Naive thymus-derived CD4-positive, alpha-beta T cell (primary cell): ENCODE measurements at regions of chr15 and their contacts with region 1.

Region 1: GRCh38 chr15:85689729-85690128 is 105.0 kb downstream of the KLHL25 start:
- DNase-seq: peak; percentile 44 to 78 (median 71)
- ATAC-seq: peak; percentile 85
- H3K4me3 ChIP-seq: peak overlapping the region; percentile 83
- H3K4me3 Mint-ChIP-seq: peak overlapping the region; percentile 90 to 99 (median 98)
- H3K27ac ChIP-seq: peak overlapping the region; percentile 88
- H3K27ac Mint-ChIP-seq: peak overlapping the region; percentile 92 to 99 (median 98)
- H3K4me1 ChIP-seq: peaks cover 45 to 49% of the 10 kb centered on the region in 2 donors
- H3K4me1 Mint-ChIP-seq: peaks cover 30 to 87% (median 76%) of the 10 kb centered on the region in 7 donors
- H3K27me3 ChIP-seq: no peaks in the 10 kb centered on the region
- H3K27me3 Mint-ChIP-seq: no peaks in the 10 kb centered on the region

Region 2: GRCh38 chr15:85318048-85318731 is 371.5 kb before region 1 on chr15:
- CTCF ChIA-PET with region 1: no interaction called
- POLR2A ChIA-PET with region 1: no interaction called
- intact Hi-C with region 1: loop called in 1 of 2 experiments (anchors 5 kb)
- DNase-seq: peak in 1 of 9 donors; percentile 29
- ATAC-seq: peak; percentile 61
- H3K4me3 ChIP-seq: no peak overlapping the region
- H3K4me3 Mint-ChIP-seq: peak overlapping the region in 2 of 10 donors; percentile 16 to 74
- H3K27ac ChIP-seq: no peak overlapping the region
- H3K27ac Mint-ChIP-seq: peak overlapping the region in 4 of 9 donors; percentile 22 to 90 (median 27)
- H3K4me1 ChIP-seq: peaks cover 28 to 29% of the 10 kb centered on the region in 2 donors
- H3K4me1 Mint-ChIP-seq: peaks cover 22 to 53% (median 35%) of the 10 kb centered on the region in 7 donors
- H3K27me3 ChIP-seq: no peaks in the 10 kb centered on the region
- H3K27me3 Mint-ChIP-seq: no peaks in the 10 kb centered on the region

Region 3: GRCh38 chr15:85361323-85361722 is 328.4 kb before region 1 on chr15:
- CTCF ChIA-PET with region 1: no interaction called
- POLR2A ChIA-PET with region 1: no interaction called
- intact Hi-C with region 1: no loop called
- DNase-seq: no peak
- ATAC-seq: no peak
- H3K4me3 ChIP-seq: no peak overlapping the region
- H3K4me3 Mint-ChIP-seq: no peak overlapping the region
- H3K27ac ChIP-seq: no peak overlapping the region
- H3K27ac Mint-ChIP-seq: no peak overlapping the region
- H3K4me1 ChIP-seq: no peaks in the 10 kb centered on the region
- H3K4me1 Mint-ChIP-seq: peaks cover 0 to 10% (median 6%) of the 10 kb centered on the region in 7 donors
- H3K27me3 ChIP-seq: no peaks in the 10 kb centered on the region
- H3K27me3 Mint-ChIP-seq: peaks cover 0 to 9% (median 0%) of the 10 kb centered on the region in 5 donors

Region 4: GRCh38 chr15:85543741-85544155 is 146.0 kb before region 1 on chr15:
- CTCF ChIA-PET with region 1: no interaction called
- POLR2A ChIA-PET with region 1: no interaction called
- intact Hi-C with region 1: loop called in 1 of 2 experiments (anchors 5 kb)
- DNase-seq: peak in 8 of 9 donors; percentile 18 to 60 (median 40)
- ATAC-seq: peak; percentile 81
- H3K4me3 ChIP-seq: no peak overlapping the region
- H3K4me3 Mint-ChIP-seq: peak overlapping the region; percentile 46 to 76 (median 63)
- H3K27ac ChIP-seq: peak overlapping the region; percentile 32
- H3K27ac Mint-ChIP-seq: peak overlapping the region; percentile 44 to 93 (median 69)
- H3K4me1 ChIP-seq: peaks cover 0 to 21% of the 10 kb centered on the region in 2 donors
- H3K4me1 Mint-ChIP-seq: peaks cover 49 to 87% (median 77%) of the 10 kb centered on the region in 7 donors
- H3K27me3 ChIP-seq: no peaks in the 10 kb centered on the region
- H3K27me3 Mint-ChIP-seq: no peaks in the 10 kb centered on the region

Region 5: GRCh38 chr15:85646538-85647091 is 43.1 kb before region 1 on chr15:
- CTCF ChIA-PET with region 1: no interaction called
- POLR2A ChIA-PET with region 1: no interaction called
- intact Hi-C with region 1: loop called in 1 of 2 experiments (anchors 2 kb)
- DNase-seq: peak in 1 of 9 donors; percentile 35
- ATAC-seq: peak; percentile 78
- H3K4me3 ChIP-seq: no peak overlapping the region
- H3K4me3 Mint-ChIP-seq: peak overlapping the region in 2 of 10 donors; percentile 21 to 51
- H3K27ac ChIP-seq: no peak overlapping the region
- H3K27ac Mint-ChIP-seq: peak overlapping the region in 6 of 9 donors; percentile 10 to 81 (median 48)
- H3K4me1 ChIP-seq: peaks cover 8 to 35% of the 10 kb centered on the region in 2 donors
- H3K4me1 Mint-ChIP-seq: peaks cover 28 to 45% (median 38%) of the 10 kb centered on the region in 7 donors
- H3K27me3 ChIP-seq: no peaks in the 10 kb centered on the region
- H3K27me3 Mint-ChIP-seq: no peaks in the 10 kb centered on the region

Region 6: GRCh38 chr15:85702321-85703101 is 12.8 kb after region 1 on chr15:
- CTCF ChIA-PET with region 1: no interaction called
- POLR2A ChIA-PET with region 1: interaction called, 50 read pairs
- intact Hi-C with region 1: loop called (anchors 1 kb)
- DNase-seq: peak in 4 of 9 donors; percentile 16 to 52 (median 28)
- ATAC-seq: peak; percentile 45
- H3K4me3 ChIP-seq: peak overlapping the region; percentile 50
- H3K4me3 Mint-ChIP-seq: peak overlapping the region; percentile 35 to 89 (median 82)
- H3K27ac ChIP-seq: peak overlapping the region; percentile 78
- H3K27ac Mint-ChIP-seq: peak overlapping the region; percentile 88 to 98 (median 94)
- H3K4me1 ChIP-seq: peaks cover 52 to 74% of the 10 kb centered on the region in 2 donors
- H3K4me1 Mint-ChIP-seq: peaks cover 45 to 90% (median 80%) of the 10 kb centered on the region in 7 donors
- H3K27me3 ChIP-seq: no peaks in the 10 kb centered on the region
- H3K27me3 Mint-ChIP-seq: no peaks in the 10 kb centered on the region